ENCODE measurements at regions of chr1 and their contacts with region 1.

Region 1: GRCh38 chr1:29550119-29550898 is 314.0 kb downstream of the PTPRU start:
- DNase-seq: no peak
- ATAC-seq: peak in 1 of 2 donors; percentile 23
- H3K4me3 ChIP-seq: no peak overlapping the region
- H3K27ac ChIP-seq: no peak overlapping the region
- H3K4me1 ChIP-seq: no peaks in the 10 kb centered on the region
- H3K27me3 ChIP-seq: no peaks in the 10 kb centered on the region

Region 2: DNA sequence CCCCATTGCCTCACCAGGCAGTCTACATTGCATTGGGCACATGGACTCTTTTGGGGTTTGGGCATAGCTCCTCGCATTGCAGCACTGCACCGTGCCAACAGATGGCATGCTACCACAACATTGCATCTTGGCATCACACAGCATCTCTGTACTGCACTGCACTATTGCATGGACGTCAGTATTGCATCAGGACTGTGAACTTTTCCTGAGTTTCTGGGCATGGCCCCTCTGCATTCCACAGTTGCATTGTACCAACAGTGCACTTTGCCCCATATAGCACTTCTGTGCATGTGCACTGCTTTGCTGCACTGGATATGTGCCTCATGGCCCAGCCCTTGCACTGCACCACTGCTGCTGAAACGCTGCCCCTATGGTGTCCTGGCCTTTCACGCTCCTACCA is 304.4 kb before region 1 on chr1:
- intact Hi-C with region 1: no loop called
- DNase-seq: no peak
- ATAC-seq: peak in 1 of 2 donors; percentile 19
- H3K4me3 ChIP-seq: no peak overlapping the region
- H3K27ac ChIP-seq: no peak overlapping the region
- H3K4me1 ChIP-seq: no peaks in the 10 kb centered on the region
- H3K27me3 ChIP-seq: no peaks in the 10 kb centered on the region

Region 3: DNA sequence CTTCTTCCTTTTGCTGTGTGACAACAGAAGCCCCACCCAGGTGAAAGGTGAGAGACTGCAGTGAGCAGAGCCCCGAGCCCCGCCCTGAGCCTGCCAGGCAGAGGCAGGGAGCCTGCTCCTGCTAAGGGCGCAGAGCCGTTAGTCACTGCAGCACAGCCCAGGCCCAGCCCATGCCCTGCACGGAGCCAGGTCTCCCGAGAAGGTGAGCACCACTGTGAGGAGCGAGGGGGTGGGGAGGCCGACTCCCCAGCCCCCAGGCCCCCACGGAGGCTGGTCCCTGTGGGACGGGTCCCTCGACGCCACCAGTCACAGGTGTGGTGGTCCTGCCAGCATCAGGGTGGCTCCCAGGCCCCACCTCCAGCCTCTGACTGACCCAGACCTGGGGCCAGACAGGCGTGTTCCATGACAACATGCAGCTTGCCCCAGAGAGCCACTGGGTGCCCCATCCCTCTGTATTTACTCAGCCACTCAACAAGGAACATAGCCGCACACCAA is 1107.5 kb after region 1 on chr1:
- intact Hi-C with region 1: loop called in 1 of 4 experiments (anchors 5 kb)
- DNase-seq: no peak
- ATAC-seq: peak in 1 of 2 donors; percentile 40
- H3K4me3 ChIP-seq: no peak overlapping the region
- H3K27ac ChIP-seq: no peak overlapping the region
- H3K4me1 ChIP-seq: no peaks in the 10 kb centered on the region
- H3K27me3 ChIP-seq: no peaks in the 10 kb centered on the region

Measured in right cardiac atrium (tissue), 5 donors.